Activated naive CD4-positive, alpha-beta T cell treated with anti-CD3 and anti-CD28 coated beads, Interleukin-2, amount 10 ng/mL, durations not matched to agents 7 days and 5 days (primary cell): ENCODE measurements at regions of chr19 and their contacts with region 1.

Region 1: DNA sequence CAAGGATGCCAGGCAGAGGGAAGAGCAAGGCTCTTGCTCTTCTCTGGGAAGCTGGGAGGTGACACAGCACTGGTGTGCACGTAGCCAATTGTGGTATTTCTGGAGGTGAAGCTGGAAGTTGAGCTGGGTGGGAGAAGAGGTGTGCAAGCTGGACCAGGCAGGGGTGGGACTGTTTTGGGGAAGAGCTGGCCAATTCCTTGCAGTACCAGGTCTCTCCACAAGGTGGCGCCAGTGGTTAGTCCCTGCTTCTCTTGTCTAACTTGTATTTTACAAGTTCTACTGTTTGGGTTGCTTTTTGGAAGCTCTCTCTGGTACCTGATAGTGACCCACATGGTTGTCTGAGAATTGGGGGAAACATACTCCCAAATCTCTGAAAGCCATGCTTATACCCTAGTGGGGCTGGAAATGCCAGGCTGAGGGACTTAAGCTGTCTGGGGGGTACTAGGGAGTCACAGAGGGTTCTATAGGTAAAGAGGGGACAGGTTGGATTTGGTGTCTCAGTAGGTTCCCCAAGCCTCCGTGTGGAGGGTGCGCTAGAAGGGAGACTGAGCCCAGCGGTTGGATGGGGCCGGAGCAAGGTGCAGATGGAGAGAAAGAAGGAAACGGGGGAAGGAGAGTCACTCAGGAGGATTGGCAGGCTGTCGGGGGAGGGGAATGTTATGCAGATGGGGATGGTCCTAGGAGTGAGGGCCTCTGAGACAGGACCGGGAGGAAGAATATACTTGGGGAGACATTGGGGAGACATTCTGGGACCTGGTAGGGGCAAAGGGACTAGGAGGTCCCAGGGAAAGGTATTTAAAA is 3.0 kb downstream of the HPN start:
- DNase-seq: peak; percentile 77
- H3K4me3 Mint-ChIP-seq: no peak overlapping the region
- H3K27ac Mint-ChIP-seq: no peak overlapping the region
- H3K4me1 Mint-ChIP-seq: peaks cover 27% of the 10 kb centered on the region
- H3K27me3 Mint-ChIP-seq: peaks cover 70% of the 10 kb centered on the region

Region 2: GRCh38 chr19:35034005-35034502 is 10.5 kb before region 1 on chr19:
- CTCF ChIA-PET with region 1: interaction called, 10 read pairs
- DNase-seq: no peak
- H3K4me3 Mint-ChIP-seq: no peak overlapping the region
- H3K27ac Mint-ChIP-seq: no peak overlapping the region
- H3K4me1 Mint-ChIP-seq: peaks cover 9% of the 10 kb centered on the region
- H3K27me3 Mint-ChIP-seq: peaks cover 73% of the 10 kb centered on the region

Region 3: DNA sequence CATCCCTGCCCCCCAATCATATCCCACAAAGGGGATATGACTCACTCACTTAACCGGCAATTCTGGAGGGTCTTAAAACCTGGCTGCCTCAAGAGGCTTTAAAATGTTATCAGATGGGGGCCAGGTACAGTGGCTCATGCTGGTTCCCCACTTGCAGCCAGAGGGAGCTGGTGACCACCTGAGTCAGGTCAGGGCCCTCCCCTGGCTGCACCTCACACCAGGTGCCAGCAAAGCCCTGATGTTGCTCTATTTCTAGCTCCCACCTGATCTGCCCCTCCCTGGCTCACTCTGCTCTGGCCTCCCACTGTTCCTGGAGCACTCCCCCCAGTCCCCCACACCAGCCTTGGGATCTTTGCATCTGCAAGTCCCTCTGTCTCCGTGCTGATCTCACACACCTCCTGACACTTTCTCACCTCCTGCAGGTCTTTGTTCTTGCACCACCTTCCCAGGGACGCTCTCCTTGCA is 11.2 kb after region 1 on chr19:
- CTCF ChIA-PET with region 1: interaction called, 15 read pairs
- DNase-seq: peak; percentile 36
- H3K4me3 Mint-ChIP-seq: no peak overlapping the region
- H3K27ac Mint-ChIP-seq: no peak overlapping the region
- H3K4me1 Mint-ChIP-seq: no peaks in the 10 kb centered on the region
- H3K27me3 Mint-ChIP-seq: peaks cover 33% of the 10 kb centered on the region

Region 4: DNA sequence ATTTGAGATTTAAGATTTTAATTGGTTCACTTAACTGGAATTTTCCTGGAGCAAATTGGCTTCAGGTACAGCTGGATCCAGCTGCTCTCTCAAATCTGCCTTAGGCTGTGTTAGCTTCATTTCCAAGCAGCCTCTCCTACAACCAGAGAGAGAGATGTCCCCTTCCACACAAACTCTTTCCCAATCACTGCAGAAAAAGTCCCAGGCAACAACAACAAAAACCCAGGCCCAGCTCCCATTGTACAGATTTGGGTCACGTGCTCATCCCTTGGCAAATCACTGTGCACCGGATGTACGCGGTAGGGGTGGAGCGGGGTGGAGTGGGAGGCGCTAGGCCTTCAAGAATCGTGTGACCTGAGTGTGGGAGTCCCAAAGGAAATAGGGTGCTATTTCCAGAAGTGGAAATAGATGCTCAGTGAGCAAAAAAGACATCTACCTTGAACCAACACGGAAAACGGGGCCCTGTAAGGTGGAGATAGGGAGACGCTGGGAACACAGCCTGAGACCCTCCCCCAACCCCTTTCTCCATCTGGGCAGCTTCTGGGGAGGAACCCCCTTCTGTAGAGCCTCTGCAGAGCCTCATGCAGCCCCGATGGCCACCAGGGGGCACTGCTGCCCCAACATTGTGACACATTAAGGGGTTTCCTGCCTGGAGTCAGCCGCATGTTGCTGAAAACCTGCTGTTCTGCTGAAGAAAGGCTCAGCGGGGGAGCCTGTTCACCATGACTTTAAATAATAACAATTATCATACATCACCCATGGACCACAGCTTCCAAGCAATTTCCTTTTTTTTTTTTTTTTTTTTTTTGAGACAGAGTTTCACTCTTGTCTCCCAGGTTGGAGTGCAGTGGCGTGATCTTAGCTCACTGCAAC is 22.4 kb after region 1 on chr19:
- CTCF ChIA-PET with region 1: interaction called, 11 read pairs
- DNase-seq: peak; percentile 92
- H3K4me3 Mint-ChIP-seq: no peak overlapping the region
- H3K27ac Mint-ChIP-seq: no peak overlapping the region
- H3K4me1 Mint-ChIP-seq: peaks cover 10% of the 10 kb centered on the region
- H3K27me3 Mint-ChIP-seq: peaks cover 9% of the 10 kb centered on the region

Region 5: DNA sequence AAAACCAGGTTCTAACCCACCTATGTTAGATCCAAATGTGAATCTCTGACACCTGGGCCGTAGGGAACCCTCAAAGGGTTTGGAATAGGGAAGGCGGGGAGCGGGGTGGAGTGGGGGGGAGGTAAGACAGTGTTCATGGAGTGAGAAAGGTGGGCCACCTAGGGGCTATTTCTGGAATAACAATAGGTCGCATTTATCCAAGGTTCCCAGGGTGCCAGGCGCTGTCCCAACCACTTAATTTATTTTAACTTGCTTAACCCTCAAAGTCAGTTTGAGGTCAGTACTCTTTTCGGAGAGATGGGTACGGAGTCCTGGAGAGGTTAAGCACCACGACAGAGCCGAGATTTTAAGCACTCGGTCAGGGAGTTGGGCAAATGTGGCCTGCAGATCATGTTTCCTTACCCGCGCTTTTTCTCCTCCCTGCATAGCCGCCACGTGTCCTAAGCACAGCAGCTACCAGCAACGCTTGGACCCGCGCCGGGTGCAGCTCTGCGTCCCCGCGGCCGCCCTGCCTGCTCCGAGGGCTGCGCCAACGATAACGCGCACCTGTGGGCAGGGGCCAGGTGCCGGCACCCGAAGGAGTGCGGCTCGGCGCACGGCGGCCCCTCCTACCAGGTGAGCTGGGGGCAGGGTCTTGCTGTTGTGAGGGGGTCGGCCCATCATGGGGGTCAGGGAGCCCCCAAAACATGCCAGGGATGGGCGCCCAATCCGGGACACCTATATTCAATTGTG is 46.2 kb after region 1 on chr19:
- CTCF ChIA-PET with region 1: interaction called, 13 read pairs
- DNase-seq: peak; percentile 55
- H3K4me3 Mint-ChIP-seq: no peak overlapping the region
- H3K27ac Mint-ChIP-seq: no peak overlapping the region
- H3K4me1 Mint-ChIP-seq: peaks cover 2% of the 10 kb centered on the region
- H3K27me3 Mint-ChIP-seq: peaks cover 33% of the 10 kb centered on the region

Region 6: DNA sequence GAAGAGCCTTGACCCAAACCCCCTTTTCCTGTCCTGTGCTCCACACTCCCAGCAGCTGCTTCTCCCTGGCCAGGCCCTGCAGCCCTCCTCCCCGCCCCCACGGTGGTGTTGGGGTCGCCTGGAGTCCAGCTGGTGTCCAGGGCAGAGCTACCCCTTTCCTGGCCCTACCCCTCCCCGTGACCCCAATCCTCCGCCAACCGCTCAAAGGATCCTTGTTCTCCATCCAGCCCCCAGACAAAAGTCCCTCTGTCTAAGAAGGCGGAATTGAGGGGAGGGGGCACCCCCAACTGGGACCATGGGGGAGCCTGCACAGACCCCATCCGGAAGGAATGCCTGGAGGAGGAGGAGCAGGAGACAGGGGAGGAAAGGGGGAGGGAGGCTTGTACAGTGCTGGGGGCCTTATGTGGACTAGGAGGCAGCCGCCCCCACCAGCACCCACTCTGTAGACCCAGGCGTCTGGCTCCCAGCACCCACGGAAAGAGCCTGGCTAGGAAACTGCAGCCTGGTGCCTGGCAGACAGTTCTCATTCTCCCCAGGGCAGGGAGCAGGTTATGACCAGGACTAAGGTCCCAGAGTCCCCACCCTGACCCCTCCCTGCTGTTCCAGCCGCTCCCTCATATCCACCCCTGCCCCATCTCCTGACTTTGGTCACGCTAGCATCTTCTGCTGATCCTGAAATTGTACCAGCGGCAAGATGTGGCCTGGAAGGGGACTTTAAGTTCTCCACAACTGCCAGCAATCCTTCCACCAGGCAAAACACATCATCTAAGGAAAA is 70.8 kb after region 1 on chr19 and contains the start of gene FXYD3:
- CTCF ChIA-PET with region 1: no interaction called
- DNase-seq: no peak
- H3K4me3 Mint-ChIP-seq: no peak within 1 kb of the TSS
- H3K27ac Mint-ChIP-seq: peak within 1 kb of the TSS; percentile 24
- H3K4me1 Mint-ChIP-seq: peaks cover 9% of the 10 kb centered on the region
- H3K27me3 Mint-ChIP-seq: peaks cover 26% of the 10 kb centered on the region

Region 7: GRCh38 chr19:35135389-35135909 is 90.9 kb after region 1 on chr19:
- CTCF ChIA-PET with region 1: interaction called, 19 read pairs
- DNase-seq: peak; percentile 77
- H3K4me3 Mint-ChIP-seq: no peak overlapping the region
- H3K27ac Mint-ChIP-seq: no peak overlapping the region
- H3K4me1 Mint-ChIP-seq: peaks cover 4% of the 10 kb centered on the region
- H3K27me3 Mint-ChIP-seq: peaks cover 27% of the 10 kb centered on the region

Region 8: GRCh38 chr19:35140962-35141637 is 96.6 kb after region 1 on chr19:
- CTCF ChIA-PET with region 1: interaction called, 19 read pairs
- DNase-seq: peak; percentile 97
- H3K4me3 Mint-ChIP-seq: peak overlapping the region; percentile 78
- H3K27ac Mint-ChIP-seq: peak overlapping the region; percentile 91
- H3K4me1 Mint-ChIP-seq: peaks cover 41% of the 10 kb centered on the region
- H3K27me3 Mint-ChIP-seq: peaks cover 66% of the 10 kb centered on the region